ENCODE measurements at regions of chr6 and their contacts with region 1.

Region 1: GRCh38 chr6:151323791-151324487 is 67.4 kb downstream of the ZBTB2 start:
- H3K4me3 Mint-ChIP-seq: no peak overlapping the region
- H3K27ac Mint-ChIP-seq: no peak overlapping the region
- H3K4me1 Mint-ChIP-seq: peaks cover 20% of the 10 kb centered on the region
- H3K27me3 Mint-ChIP-seq: peaks cover 57% of the 10 kb centered on the region

Region 2: DNA sequence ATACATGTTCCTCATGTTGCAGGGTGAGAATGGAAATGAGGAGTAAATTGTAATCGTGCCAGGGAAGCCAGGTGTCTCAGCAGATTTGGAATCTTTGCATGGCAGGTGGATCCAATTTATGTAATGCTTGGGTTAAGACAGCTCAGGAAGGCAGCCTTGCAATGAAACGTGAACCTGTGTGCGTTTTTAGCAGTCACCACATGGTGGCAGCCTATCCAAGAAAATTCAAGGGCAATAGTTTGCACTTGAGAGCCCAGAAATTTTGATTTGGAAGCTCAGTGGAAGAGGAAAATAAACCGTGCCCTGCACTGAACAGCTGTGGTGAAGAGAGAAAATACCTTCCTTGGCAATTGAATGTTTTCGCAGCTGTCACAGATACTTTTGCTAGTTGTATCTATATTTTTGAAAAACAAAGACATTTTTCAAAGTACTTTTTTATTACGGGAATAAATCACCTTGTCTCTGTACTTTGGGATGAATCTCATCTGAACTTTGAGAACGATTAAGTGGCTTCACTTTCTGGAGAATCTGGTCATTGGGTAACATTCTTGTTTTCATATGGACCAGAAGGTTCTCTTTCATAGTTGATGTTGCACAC is 432.0 kb before region 1 on chr6:
- intact Hi-C with region 1: loop called (anchors 1 kb)
- H3K4me3 Mint-ChIP-seq: no peak overlapping the region
- H3K27ac Mint-ChIP-seq: no peak overlapping the region
- H3K4me1 Mint-ChIP-seq: peaks cover 7% of the 10 kb centered on the region
- H3K27me3 Mint-ChIP-seq: no peaks in the 10 kb centered on the region

Region 3: GRCh38 chr6:151014404-151015100 is 309.4 kb before region 1 on chr6:
- intact Hi-C with region 1: loop called (anchors 1 kb)
- H3K4me3 Mint-ChIP-seq: no peak overlapping the region
- H3K27ac Mint-ChIP-seq: no peak overlapping the region
- H3K4me1 Mint-ChIP-seq: peaks cover 9% of the 10 kb centered on the region
- H3K27me3 Mint-ChIP-seq: no peaks in the 10 kb centered on the region